ENCODE measurements at regions of chr22 and their contacts with region 1.

Region 1: GRCh38 chr22:42090596-42091454 is at the start of gene NDUFA6:
- DNase-seq: peak; percentile 97
- ATAC-seq: peak; percentile 95
- H3K4me3 ChIP-seq: peak within 1 kb of the TSS; percentile 84 to 98 (median 91)
- H3K27ac ChIP-seq: peak within 1 kb of the TSS; percentile 99
- H3K4me1 ChIP-seq: peaks cover 23% of the 10 kb centered on the region
- H3K27me3 ChIP-seq: no peaks in the 10 kb centered on the region
- CTCF ChIP-seq: peak; percentile 100
- EP300 ChIP-seq: peak in 1 of 2 experiments; percentile 53; a peak in 1 of 4 replicates
- POLR2A ChIP-seq: peak; percentile 86 to 96
- RAD21 ChIP-seq: peak; percentile 98
- total RNA-seq, gene NDUFA6: 87.8 and 107 TPM in 2 replicates

Region 2: GRCh38 chr22:42070517-42071422 is 20.1 kb before region 1 on chr22 and contains the start of gene NAGA:
- CTCF ChIA-PET with region 1: no interaction called
- POLR2A ChIA-PET with region 1: interaction called, 16 read pairs
- in situ Hi-C with region 1: no loop called
- intact Hi-C with region 1: no loop called
- DNase-seq: peak; percentile 92
- ATAC-seq: peak; percentile 98
- H3K4me3 ChIP-seq: peak within 1 kb of the TSS; percentile 52 to 79 (median 64)
- H3K27ac ChIP-seq: peak within 1 kb of the TSS; percentile 68
- H3K4me1 ChIP-seq: peaks cover 36% of the 10 kb centered on the region
- H3K27me3 ChIP-seq: no peaks in the 10 kb centered on the region; a peak in 1 of 5 replicates
- CTCF ChIP-seq: 0 out of 2 replicates have a peak, but pooled peaks have one; percentile 16
- EP300 ChIP-seq: no peak
- POLR2A ChIP-seq: peak; percentile 67 to 92
- RAD21 ChIP-seq: no peak
- total RNA-seq, gene NAGA: 9.1 and 15.1 TPM in 2 replicates

Region 3: DNA sequence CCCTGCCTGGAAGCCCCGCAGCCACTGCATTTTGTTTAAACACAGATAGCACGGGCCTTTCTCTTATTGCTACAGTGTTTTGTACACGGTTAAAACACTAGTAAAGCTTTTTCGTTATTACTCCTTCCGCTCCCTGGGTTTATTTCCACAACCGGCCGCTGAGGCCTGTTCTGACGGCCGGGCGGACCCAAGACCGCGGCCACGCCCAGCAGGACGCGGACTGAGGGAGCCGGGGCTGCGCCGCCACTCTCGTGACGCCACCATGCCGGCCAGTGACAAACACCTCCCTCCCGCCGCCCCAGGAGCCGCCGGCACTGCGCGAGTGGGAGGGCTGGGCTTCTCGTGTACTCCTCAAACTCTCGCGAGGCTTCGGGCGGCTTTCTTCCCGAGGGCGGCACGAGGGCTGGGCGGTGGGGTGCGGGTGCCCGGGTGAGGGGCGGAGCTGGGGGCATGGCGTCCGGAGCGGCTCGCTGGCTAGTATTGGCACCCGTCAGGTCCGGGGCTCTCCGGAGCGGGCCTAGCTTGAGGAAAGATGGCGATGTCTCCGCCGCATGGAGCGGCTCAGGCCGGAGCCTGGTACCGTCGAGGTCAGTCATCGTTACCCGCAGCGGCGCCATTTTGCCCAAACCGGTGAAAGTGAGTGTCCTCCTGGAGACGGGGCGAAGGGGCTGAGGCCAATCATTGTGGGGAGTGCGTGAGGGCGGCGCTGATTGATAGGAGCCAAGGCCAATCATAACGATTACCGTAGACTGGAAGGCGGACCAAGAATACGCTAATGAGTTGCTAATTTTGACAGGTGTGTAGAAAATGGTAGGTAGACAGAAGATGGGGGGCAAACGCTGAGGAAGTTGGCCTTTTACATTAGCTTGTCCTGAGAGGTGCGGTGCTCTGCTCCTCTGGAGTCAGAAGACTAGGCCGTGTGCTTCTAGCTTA is 11.2 kb before region 1 on chr22 and contains the start of gene SMDT1:
- CTCF ChIA-PET with region 1: interaction called, 3 read pairs
- POLR2A ChIA-PET with region 1: interaction called, 89 read pairs
- in situ Hi-C with region 1: no loop called
- intact Hi-C with region 1: loop called (anchors 1 kb)
- DNase-seq: peak; percentile 95
- ATAC-seq: peak; percentile 92
- H3K4me3 ChIP-seq: peak within 1 kb of the TSS; percentile 78 to 88 (median 87)
- H3K27ac ChIP-seq: peak within 1 kb of the TSS; percentile 91
- H3K4me1 ChIP-seq: peaks cover 22% of the 10 kb centered on the region
- H3K27me3 ChIP-seq: no peaks in the 10 kb centered on the region; a peak in 1 of 5 replicates
- CTCF ChIP-seq: no peak; the same call in 1 of the 2 replicates
- EP300 ChIP-seq: no peak
- POLR2A ChIP-seq: peak; percentile 77 to 86
- RAD21 ChIP-seq: 0 out of 2 replicates have a peak, but pooled peaks have one; percentile 28
- total RNA-seq, gene SMDT1: 8.3 and 13.3 TPM in 2 replicates

Measured in HepG2 (cell line).